ENCODE measurements at regions of chr1 and their contacts with region 1.

Region 1: GRCh38 chr1:226407497-226408284 is at the start of gene PARP1:
- DNase-seq: peak; percentile 78 to 94 (median 86)
- ATAC-seq: peak; percentile 87
- H3K4me3 ChIP-seq: peak within 1 kb of the TSS; percentile 68 to 92
- H3K4me3 Mint-ChIP-seq: peak within 1 kb of the TSS; percentile 94
- H3K27ac ChIP-seq: peak within 1 kb of the TSS; percentile 64 to 65
- H3K27ac Mint-ChIP-seq: peak within 1 kb of the TSS; percentile 90
- H3K4me1 ChIP-seq: peaks cover 45% of the 10 kb centered on the region
- H3K4me1 Mint-ChIP-seq: peaks cover 46% of the 10 kb centered on the region
- H3K27me3 ChIP-seq: no peaks in the 10 kb centered on the region
- H3K27me3 Mint-ChIP-seq: no peaks in the 10 kb centered on the region
- CTCF ChIP-seq: peak; percentile 73
- total RNA-seq, gene PARP1: 38.6 to 46.2 TPM

Region 2: DNA sequence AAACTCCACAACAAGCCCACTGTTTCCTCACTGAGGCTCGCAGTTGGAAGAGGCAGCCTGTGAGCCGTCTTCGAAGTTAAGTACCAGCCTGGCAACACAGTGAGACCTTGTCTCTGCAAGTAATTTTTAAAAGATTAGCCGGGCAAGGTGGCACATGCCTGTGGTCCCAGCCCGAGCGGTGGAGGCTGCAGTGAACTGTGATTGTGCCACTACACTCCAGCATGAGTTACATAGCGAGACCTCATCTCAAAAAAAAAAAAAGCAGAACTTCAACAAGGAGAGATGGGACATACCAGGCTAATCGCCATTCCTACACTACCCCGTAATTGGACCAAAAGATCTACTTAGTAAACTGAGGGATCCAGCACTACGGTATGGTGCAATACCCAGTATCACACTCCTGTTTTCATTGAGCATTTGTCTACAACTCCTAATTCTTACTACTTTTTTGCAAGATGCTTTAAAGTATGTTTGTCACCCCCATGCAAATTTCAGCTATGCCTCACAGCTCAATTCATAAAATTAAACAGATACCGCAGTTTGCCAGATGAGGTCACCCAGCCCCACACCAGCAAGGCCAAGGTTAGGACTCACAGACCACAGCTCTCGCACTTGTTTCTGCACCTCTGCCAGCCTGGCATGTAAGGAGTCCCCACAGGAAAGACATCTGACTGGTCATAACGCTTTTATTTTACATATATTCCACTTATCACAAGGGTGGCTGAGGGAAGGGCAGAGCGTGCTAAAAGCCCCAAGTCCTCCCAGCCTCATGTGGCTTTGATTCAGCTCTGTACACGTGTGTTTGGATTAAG is 429.5 kb before region 1 on chr1:
- CTCF ChIA-PET with region 1: no interaction called
- POLR2A ChIA-PET with region 1: no interaction called
- intact Hi-C with region 1: no loop called
- DNase-seq: peak in 3 of 9 experiments; percentile 27 to 45 (median 33)
- ATAC-seq: no peak
- H3K4me3 ChIP-seq: no peak overlapping the region
- H3K4me3 Mint-ChIP-seq: no peak overlapping the region
- H3K27ac ChIP-seq: no peak overlapping the region
- H3K27ac Mint-ChIP-seq: no peak overlapping the region
- H3K4me1 ChIP-seq: no peaks in the 10 kb centered on the region
- H3K4me1 Mint-ChIP-seq: peaks cover 4% of the 10 kb centered on the region
- H3K27me3 ChIP-seq: no peaks in the 10 kb centered on the region
- H3K27me3 Mint-ChIP-seq: no peaks in the 10 kb centered on the region
- CTCF ChIP-seq: no peak

Region 3: DNA sequence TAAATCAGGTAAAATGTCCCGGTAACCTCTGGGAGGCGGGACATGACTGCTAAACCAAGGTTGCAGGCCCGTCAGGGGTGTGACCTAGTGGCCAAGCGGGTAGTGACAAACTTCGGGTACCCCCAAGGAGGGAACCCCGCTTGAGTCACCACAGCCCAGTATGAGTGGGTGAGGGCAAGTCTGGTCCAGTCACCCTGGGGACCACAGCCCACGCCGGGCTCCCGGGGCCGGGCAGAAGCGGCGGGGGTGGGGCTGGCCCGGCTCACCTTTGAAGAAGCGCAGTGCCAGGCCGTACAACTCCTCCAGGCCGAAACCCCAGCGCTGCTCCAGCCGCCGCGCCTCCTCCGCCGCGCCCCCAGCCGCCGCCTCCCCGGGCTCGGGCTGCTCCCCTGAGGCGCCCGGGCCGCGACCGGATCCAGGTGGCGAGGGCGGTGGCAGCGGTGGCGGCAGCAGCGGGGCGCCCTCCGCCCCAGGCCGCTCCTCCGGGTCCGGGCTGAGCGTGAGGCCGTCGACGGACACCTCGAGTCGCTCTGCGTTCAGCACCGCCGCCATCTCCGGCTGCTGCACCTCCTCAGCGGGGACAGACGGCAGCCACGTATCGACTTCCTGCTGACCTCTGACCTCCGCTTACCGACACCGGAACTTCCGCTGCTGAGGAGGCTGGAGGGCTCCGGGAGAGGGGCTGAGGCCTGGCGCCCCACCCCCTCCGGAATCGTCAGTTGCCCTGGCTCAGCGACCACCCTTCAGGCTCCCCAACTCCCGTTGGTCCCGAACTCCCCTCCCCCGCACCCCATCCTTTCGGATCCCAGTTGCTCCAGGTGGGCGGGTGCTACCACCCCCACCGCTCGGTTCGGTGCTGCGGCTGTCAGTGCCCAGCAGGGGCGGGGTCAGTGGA is 221.3 kb before region 1 on chr1 and contains the start of gene ACBD3:
- CTCF ChIA-PET with region 1: no interaction called
- POLR2A ChIA-PET with region 1: no interaction called
- intact Hi-C with region 1: loop called in 1 of 2 experiments (anchors 5 kb)
- DNase-seq: peak; percentile 67 to 95 (median 87)
- ATAC-seq: peak; percentile 97
- H3K4me3 ChIP-seq: peak within 1 kb of the TSS; percentile 82 to 90
- H3K4me3 Mint-ChIP-seq: peak within 1 kb of the TSS; percentile 92
- H3K27ac ChIP-seq: peak within 1 kb of the TSS; percentile 72 to 88
- H3K27ac Mint-ChIP-seq: peak within 1 kb of the TSS; percentile 95
- H3K4me1 ChIP-seq: peaks cover 41% of the 10 kb centered on the region
- H3K4me1 Mint-ChIP-seq: peaks cover 40% of the 10 kb centered on the region
- H3K27me3 ChIP-seq: no peaks in the 10 kb centered on the region
- H3K27me3 Mint-ChIP-seq: no peaks in the 10 kb centered on the region
- CTCF ChIP-seq: no peak
- total RNA-seq, gene ACBD3: 40.9 to 41.4 TPM

Region 4: DNA sequence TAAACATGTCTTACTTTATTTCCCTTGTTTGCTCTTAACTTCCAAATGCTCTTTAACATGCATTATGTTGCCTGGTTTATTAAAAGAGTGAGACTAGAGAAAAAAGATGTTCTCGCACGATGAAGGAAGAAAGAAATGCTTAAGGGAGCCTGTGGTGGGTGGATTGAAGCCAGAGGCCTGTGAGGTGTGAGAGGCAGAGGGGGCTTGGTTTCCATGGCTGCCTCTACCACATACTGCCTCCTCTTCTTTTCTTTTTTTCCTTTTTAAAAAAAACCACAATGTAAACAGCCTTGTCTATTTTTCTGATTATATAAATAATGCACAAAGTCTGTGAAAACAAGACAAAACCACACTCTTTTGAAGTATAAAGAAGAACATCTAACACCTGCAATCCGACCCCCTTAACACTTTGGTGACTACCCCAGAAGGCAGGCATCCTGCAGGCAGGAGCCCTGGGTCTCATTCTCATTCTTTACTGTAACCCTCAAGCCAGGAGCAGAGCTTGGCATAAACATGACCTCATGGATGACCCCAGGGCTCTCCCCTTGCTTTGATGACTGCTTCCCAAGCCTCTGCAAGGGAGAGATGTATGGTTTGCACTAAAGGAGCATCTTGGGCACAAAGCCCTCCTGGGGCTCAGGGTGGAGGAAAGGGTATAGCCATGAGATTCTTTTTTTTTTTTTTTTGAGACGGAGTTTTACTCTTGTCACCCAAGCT is 10.3 kb after region 1 on chr1:
- CTCF ChIA-PET with region 1: interaction called, 54 read pairs
- POLR2A ChIA-PET with region 1: interaction called, 12 read pairs
- intact Hi-C with region 1: no loop called
- DNase-seq: peak in 2 of 9 experiments; percentile 51 to 64
- ATAC-seq: peak; percentile 64
- H3K4me3 ChIP-seq: no peak overlapping the region
- H3K4me3 Mint-ChIP-seq: no peak overlapping the region
- H3K27ac ChIP-seq: no peak overlapping the region
- H3K27ac Mint-ChIP-seq: no peak overlapping the region
- H3K4me1 ChIP-seq: peaks cover 14% of the 10 kb centered on the region
- H3K4me1 Mint-ChIP-seq: peaks cover 17% of the 10 kb centered on the region
- H3K27me3 ChIP-seq: no peaks in the 10 kb centered on the region
- H3K27me3 Mint-ChIP-seq: no peaks in the 10 kb centered on the region
- CTCF ChIP-seq: no peak

Region 5: DNA sequence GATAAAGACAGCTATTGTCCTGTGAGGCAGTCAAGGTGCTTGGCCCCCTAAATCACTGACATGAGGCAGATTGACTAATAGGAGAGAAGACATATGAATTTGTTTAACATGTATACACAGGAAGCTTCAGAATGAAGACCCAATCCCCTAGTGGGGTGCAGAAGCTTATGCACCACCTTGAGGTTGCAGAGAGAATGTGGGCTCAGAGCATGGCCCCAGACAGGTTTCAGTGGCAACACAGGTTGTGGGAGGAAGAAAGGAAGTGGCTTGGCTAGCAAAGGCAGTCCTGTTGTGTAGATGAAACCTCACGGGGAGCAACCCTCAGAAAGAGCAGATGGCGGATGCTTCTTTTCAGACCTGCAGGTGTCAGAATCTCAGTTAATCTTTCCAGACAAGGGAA is 37.2 kb after region 1 on chr1:
- CTCF ChIA-PET with region 1: interaction called, 36 read pairs
- POLR2A ChIA-PET with region 1: interaction called, 21 read pairs
- intact Hi-C with region 1: loop called in 1 of 2 experiments (anchors 2 kb)
- DNase-seq: peak; percentile 35 to 88 (median 68)
- ATAC-seq: peak; percentile 99
- H3K4me3 ChIP-seq: no peak overlapping the region
- H3K4me3 Mint-ChIP-seq: peak overlapping the region; percentile 12
- H3K27ac ChIP-seq: peak overlapping the region in 1 of 2 experiments; percentile 7
- H3K27ac Mint-ChIP-seq: peak overlapping the region; percentile 80
- H3K4me1 ChIP-seq: peaks cover 34% of the 10 kb centered on the region
- H3K4me1 Mint-ChIP-seq: peaks cover 35% of the 10 kb centered on the region
- H3K27me3 ChIP-seq: no peaks in the 10 kb centered on the region
- H3K27me3 Mint-ChIP-seq: no peaks in the 10 kb centered on the region
- CTCF ChIP-seq: peak; percentile 44

Region 6: DNA sequence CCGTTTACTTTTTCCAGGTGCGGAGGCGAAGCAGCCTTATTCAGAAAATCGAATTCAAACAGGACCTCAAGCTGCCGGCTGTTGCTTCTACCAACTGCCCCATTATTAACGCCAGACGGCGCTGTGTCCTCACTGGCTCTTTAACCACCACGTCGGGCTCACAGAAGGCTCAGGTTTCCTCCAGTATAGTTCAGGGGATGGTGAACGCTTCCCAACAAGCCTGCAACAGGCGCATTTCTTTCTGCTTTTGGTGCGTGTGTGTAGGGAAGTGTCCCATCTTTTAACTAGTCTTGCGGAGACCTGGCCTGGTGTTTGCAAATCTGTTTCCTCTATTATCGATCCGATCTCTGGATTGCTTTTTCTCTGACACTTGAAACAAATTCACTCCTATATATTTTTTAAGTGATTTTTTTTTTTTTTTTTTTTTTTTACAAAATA is 140.1 kb after region 1 on chr1:
- CTCF ChIA-PET with region 1: interaction called, 3 read pairs
- POLR2A ChIA-PET with region 1: interaction called, 10 read pairs
- intact Hi-C with region 1: no loop called
- DNase-seq: peak; percentile 34 to 78 (median 56)
- ATAC-seq: peak; percentile 43
- H3K4me3 ChIP-seq: no peak overlapping the region
- H3K4me3 Mint-ChIP-seq: peak overlapping the region; percentile 58
- H3K27ac ChIP-seq: no peak overlapping the region
- H3K27ac Mint-ChIP-seq: no peak overlapping the region
- H3K4me1 ChIP-seq: peaks cover 20% of the 10 kb centered on the region
- H3K4me1 Mint-ChIP-seq: peaks cover 23% of the 10 kb centered on the region
- H3K27me3 ChIP-seq: peaks cover 6 to 18% of the 10 kb centered on the region in 2 experiments
- H3K27me3 Mint-ChIP-seq: peaks cover 25% of the 10 kb centered on the region
- CTCF ChIP-seq: peak; percentile 62

Measured in CD8-positive, alpha-beta T cell (primary cell).